ENCODE measurements at regions of chr4 and their contacts with region 1.

Region 1: DNA sequence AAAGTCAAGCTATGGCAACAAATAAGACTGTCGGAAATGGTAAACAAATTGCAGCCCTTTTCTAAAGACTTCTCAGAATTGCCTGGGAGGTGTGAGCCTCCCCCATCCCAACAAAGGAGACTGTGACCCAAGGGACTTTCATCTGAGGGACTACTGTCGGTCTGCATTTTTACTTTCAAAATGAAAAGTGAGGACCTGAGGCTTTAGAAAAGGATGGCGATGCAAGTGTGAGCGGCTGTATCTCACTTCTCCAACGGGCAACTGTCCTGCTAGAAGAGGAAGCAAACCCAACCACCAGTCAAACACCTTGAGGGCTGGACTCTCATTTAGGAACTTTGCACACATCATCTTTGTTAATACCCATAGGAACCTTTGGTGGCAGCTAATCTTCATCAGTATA is 62.6 kb upstream of the CLNK start:
- DNase-seq: peak; percentile 23
- CTCF ChIP-seq: no peak

Region 2: GRCh38 chr4:10732235-10732913 is 14.8 kb before region 1 on chr4:
- CTCF ChIA-PET with region 1: interaction called, 14 read pairs
- POLR2A ChIA-PET with region 1: no interaction called
- DNase-seq: no peak
- CTCF ChIP-seq: no peak